ENCODE measurements at regions of chr1 and their contacts with region 1.

Region 1: GRCh38 chr1:90114521-90115141 is 119.7 kb downstream of the ZNF326 start:
- DNase-seq: peak; percentile 50
- ATAC-seq: peak; percentile 47; the same call in 2 of the 3 replicates
- H3K4me3 ChIP-seq: no peak overlapping the region
- H3K27ac ChIP-seq: no peak overlapping the region
- H3K4me1 ChIP-seq: no peaks in the 10 kb centered on the region
- H3K27me3 ChIP-seq: no peaks in the 10 kb centered on the region
- CTCF ChIP-seq: peak; percentile 67
- EP300 ChIP-seq: no peak
- POLR2A ChIP-seq: no peak
- RAD21 ChIP-seq: no peak

Region 2: GRCh38 chr1:90045853-90046563 is 68.6 kb before region 1 on chr1:
- CTCF ChIA-PET with region 1: no interaction called
- POLR2A ChIA-PET with region 1: no interaction called
- in situ Hi-C with region 1: no loop called
- intact Hi-C with region 1: loop called (anchors 5 kb)
- DNase-seq: peak; percentile 11
- ATAC-seq: peak; percentile 77
- H3K4me3 ChIP-seq: no peak overlapping the region
- H3K27ac ChIP-seq: no peak overlapping the region
- H3K4me1 ChIP-seq: peaks cover 19% of the 10 kb centered on the region
- H3K27me3 ChIP-seq: peaks cover 0 to 7% of the 10 kb centered on the region in 2 experiments; a peak in 2 of 5 replicates
- CTCF ChIP-seq: peak; percentile 66
- EP300 ChIP-seq: no peak
- POLR2A ChIP-seq: no peak
- RAD21 ChIP-seq: 0 out of 2 replicates have a peak, but pooled peaks have one; percentile 16

Region 3: GRCh38 chr1:90092441-90092840 is 22.2 kb before region 1 on chr1:
- CTCF ChIA-PET with region 1: no interaction called
- POLR2A ChIA-PET with region 1: no interaction called
- in situ Hi-C with region 1: no loop called
- intact Hi-C with region 1: no loop called
- DNase-seq: no peak
- ATAC-seq: no peak
- H3K4me3 ChIP-seq: no peak overlapping the region
- H3K27ac ChIP-seq: no peak overlapping the region
- H3K4me1 ChIP-seq: no peaks in the 10 kb centered on the region
- H3K27me3 ChIP-seq: no peaks in the 10 kb centered on the region; a peak in 1 of 5 replicates
- CTCF ChIP-seq: no peak
- EP300 ChIP-seq: no peak
- POLR2A ChIP-seq: no peak
- RAD21 ChIP-seq: no peak

Region 4: GRCh38 chr1:90149101-90149500 is 34.5 kb after region 1 on chr1:
- CTCF ChIA-PET with region 1: no interaction called
- POLR2A ChIA-PET with region 1: no interaction called
- in situ Hi-C with region 1: no loop called
- intact Hi-C with region 1: loop called (anchors 2 kb)
- DNase-seq: no peak
- ATAC-seq: no peak
- H3K4me3 ChIP-seq: no peak overlapping the region
- H3K27ac ChIP-seq: no peak overlapping the region
- H3K4me1 ChIP-seq: no peaks in the 10 kb centered on the region
- H3K27me3 ChIP-seq: no peaks in the 10 kb centered on the region; a peak in 1 of 5 replicates
- CTCF ChIP-seq: peak; percentile 23; the same call in 1 of the 2 replicates
- EP300 ChIP-seq: no peak
- POLR2A ChIP-seq: no peak
- RAD21 ChIP-seq: no peak

Region 5: DNA sequence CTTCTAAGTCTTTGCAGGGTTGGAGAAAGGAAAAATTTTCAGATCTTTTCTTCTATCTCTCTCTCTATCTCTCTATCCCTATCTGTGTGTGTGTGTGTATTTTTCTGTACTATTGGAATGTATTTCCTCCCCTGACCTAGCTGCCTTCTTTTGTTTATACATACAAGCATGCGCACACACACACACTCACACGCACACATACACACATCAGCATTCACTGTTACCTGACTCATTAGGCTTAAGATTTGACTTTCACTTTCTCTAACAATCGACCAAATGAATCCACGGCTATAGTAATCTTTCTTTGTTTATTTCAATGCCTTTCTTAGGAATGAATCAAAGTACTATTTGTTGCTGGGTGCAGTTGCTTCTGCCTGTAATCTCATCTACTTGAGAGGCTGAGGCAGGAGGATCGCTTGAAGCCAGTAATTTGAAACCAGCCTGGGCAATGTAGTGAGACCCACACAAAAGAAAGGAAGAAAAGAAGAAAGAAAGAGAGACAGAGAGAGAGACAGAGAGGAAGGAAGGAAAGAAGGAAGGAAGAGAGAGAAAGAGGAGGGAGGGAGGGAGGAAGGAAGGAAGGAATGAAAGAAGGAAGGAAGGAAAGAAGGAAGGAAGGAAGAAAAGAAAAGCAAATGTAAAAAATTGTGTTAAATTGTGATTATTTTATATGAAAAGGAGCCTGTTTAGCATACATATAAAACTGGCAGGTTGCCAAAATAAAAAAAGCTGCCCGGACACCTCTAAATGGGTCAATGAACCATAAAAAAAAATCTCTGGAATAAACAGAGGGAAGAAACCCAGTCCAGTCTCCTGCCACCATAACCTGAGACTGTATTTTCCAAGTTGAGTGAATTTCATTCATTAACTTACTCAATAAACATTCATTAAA is 87.1 kb after region 1 on chr1:
- CTCF ChIA-PET with region 1: no interaction called
- POLR2A ChIA-PET with region 1: no interaction called
- in situ Hi-C with region 1: no loop called
- intact Hi-C with region 1: loop called (anchors 10 kb)
- DNase-seq: no peak
- ATAC-seq: no peak
- H3K4me3 ChIP-seq: no peak overlapping the region
- H3K27ac ChIP-seq: no peak overlapping the region
- H3K4me1 ChIP-seq: no peaks in the 10 kb centered on the region
- H3K27me3 ChIP-seq: no peaks in the 10 kb centered on the region
- CTCF ChIP-seq: no peak
- EP300 ChIP-seq: no peak
- POLR2A ChIP-seq: no peak
- RAD21 ChIP-seq: no peak

Measured in HepG2 (cell line).